ENCODE measurements at regions of chr2 and their contacts with region 1.

Region 1: GRCh38 chr2:19362755-19363473 is 4.5 kb upstream of the OSR1 start:
- DNase-seq: peak; percentile 75 to 80
- H3K4me3 ChIP-seq: peak overlapping the region; percentile 72
- H3K27ac ChIP-seq: peak overlapping the region; percentile 24
- H3K4me1 ChIP-seq: peaks cover 7% of the 10 kb centered on the region; the same call in 1 of the 2 replicates
- H3K27me3 ChIP-seq: no peaks in the 10 kb centered on the region
- CTCF ChIP-seq: peak; percentile 92

Region 2: DNA sequence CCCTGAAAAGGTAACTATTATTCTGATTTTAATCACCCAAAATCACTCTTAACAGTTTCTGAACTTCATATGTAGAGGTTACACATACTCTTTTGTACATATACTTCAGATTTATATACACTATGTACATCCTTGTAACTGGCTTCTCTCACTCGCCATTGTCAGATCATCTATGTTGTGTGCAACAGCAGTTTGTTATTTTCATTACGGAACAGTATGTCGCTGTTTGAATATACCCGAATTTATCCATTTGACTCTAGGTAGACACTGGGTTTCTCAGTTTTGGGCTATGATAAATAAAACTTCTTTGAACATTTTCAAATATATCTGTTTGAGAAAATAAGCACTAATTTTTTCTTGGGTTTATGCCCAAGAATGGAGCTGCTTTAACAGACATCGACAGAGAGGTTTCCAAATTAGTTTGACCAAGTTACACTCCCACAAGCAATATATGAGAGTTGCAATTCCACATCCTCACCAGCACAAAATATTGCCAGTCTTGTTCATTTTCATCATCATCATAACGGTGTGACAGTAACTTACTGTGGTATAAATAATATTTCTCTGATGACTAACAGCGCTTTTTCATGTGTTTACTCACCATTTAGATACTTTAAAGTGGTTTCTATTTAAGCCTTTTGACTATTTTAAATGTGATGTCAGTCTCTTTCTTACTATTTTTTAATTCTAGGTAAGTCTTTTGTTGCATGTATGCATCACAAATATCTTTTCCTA is 1690.2 kb before region 1 on chr2:
- CTCF ChIA-PET with region 1: interaction called, 11 read pairs
- POLR2A ChIA-PET with region 1: no interaction called
- intact Hi-C with region 1: no loop called
- DNase-seq: no peak
- H3K4me3 ChIP-seq: no peak overlapping the region
- H3K27ac ChIP-seq: no peak overlapping the region
- H3K4me1 ChIP-seq: no peaks in the 10 kb centered on the region
- H3K27me3 ChIP-seq: no peaks in the 10 kb centered on the region
- CTCF ChIP-seq: 0 out of 2 replicates have a peak, but pooled peaks have one; percentile 24

Region 3: GRCh38 chr2:18520451-18521425 is 842.2 kb before region 1 on chr2:
- CTCF ChIA-PET with region 1: no interaction called
- POLR2A ChIA-PET with region 1: no interaction called
- intact Hi-C with region 1: loop called (anchors 1 kb)
- DNase-seq: peak; percentile 56 to 73
- H3K4me3 ChIP-seq: no peak overlapping the region
- H3K27ac ChIP-seq: no peak overlapping the region
- H3K4me1 ChIP-seq: 0 out of 2 replicates have a peak, but pooled peaks cover 12% of the 10 kb centered on the region
- H3K27me3 ChIP-seq: no peaks in the 10 kb centered on the region
- CTCF ChIP-seq: peak; percentile 97

Region 4: GRCh38 chr2:18829251-18829902 is 533.5 kb before region 1 on chr2:
- CTCF ChIA-PET with region 1: interaction called, 3 read pairs
- POLR2A ChIA-PET with region 1: no interaction called
- intact Hi-C with region 1: loop called (anchors 1 kb)
- DNase-seq: peak; percentile 55 to 99
- H3K4me3 ChIP-seq: peak overlapping the region; percentile 15; the same call in 1 of the 2 replicates
- H3K27ac ChIP-seq: peak overlapping the region; percentile 82
- H3K4me1 ChIP-seq: peaks cover 86% of the 10 kb centered on the region
- H3K27me3 ChIP-seq: no peaks in the 10 kb centered on the region
- CTCF ChIP-seq: no peak

Region 5: DNA sequence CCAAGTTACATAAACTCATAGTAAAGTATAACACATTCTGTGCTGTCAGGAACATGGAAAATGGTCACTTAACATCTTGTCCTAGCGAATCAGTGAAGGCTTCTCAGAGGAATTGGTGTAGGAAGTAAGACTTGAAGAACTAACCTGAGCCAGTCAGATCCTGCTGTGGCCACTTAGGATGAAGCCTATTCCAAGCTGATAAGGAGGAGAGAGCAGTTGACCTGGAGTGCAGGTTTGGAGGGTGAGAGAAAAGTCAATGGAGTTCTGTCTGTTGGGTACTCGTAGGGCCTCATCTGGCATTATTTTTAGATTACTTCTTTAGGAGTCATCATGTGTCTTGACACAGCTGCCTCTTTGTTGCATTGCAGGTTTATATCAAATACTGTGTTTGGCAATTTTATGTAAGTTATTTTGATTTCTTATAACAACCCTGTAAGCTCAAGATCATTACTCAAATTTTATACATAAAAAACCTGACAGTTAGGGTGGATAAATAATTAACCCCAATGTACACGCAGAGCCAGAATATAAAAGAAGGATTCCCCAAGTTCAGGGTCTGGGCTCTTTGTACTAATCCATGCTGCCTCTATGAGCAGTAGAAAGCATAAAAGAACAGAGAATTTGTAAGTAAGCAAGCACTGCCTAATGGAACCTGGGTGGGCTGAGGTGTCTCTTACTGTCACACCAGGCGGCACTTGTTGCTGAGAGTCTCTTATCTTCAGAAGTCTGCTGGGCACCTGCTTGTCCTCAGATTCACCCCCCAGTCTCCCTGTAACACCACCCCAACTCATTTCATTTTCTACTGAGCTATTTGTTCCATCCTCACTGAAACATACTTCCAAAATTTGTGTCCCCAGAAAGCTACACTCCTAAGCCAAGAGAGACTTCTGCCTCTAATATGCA is 521.4 kb before region 1 on chr2:
- CTCF ChIA-PET with region 1: no interaction called
- POLR2A ChIA-PET with region 1: no interaction called
- intact Hi-C with region 1: no loop called
- DNase-seq: no peak
- H3K4me3 ChIP-seq: no peak overlapping the region
- H3K27ac ChIP-seq: no peak overlapping the region
- H3K4me1 ChIP-seq: no peaks in the 10 kb centered on the region
- H3K27me3 ChIP-seq: no peaks in the 10 kb centered on the region
- CTCF ChIP-seq: no peak

Region 6: DNA sequence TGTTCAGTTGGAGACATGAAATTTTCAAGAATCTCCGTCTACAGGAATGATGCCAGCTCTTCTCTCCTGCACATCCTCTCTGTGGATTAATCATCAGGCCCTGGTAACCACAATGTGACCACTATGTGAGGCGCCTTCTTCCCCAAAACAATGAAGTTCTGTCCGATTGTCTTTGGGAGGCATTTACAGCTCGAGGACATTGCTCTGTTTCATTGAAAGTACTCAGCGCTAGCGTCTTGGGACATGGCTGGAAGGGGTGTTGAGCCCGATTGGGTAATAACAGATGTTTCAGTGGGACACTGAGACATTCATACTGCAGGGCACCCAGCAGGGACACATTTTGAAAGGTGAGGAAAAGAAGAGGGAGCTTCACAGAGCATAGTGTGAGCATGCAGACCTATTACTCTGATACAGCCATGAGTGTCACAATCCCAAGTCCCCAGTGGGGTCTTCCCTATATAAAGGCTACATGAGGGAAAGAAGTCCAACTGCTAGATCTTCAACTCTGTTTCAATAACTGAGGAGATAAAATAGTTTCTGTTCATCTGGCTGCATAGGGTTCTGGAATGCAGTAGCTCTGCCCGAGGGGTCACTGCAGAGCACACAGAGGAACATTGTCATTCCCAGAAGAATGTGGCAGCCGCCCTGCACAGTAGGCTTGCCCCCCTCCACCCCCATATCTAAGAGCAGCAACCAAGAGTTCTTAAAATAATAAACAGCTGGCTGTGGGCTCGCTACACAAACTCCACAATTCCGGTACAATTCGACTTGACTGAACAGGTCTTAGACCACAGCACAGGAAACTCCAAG is 241.8 kb before region 1 on chr2:
- CTCF ChIA-PET with region 1: no interaction called
- POLR2A ChIA-PET with region 1: no interaction called
- intact Hi-C with region 1: loop called (anchors 5 kb)
- DNase-seq: peak; percentile 51 to 80
- H3K4me3 ChIP-seq: no peak overlapping the region
- H3K27ac ChIP-seq: peak overlapping the region; percentile 45
- H3K4me1 ChIP-seq: peaks cover 32% of the 10 kb centered on the region
- H3K27me3 ChIP-seq: no peaks in the 10 kb centered on the region
- CTCF ChIP-seq: no peak

Region 7: GRCh38 chr2:19554520-19554919 is 191.6 kb after region 1 on chr2:
- CTCF ChIA-PET with region 1: no interaction called
- POLR2A ChIA-PET with region 1: no interaction called
- intact Hi-C with region 1: no loop called
- DNase-seq: no peak
- H3K4me3 ChIP-seq: no peak overlapping the region
- H3K27ac ChIP-seq: no peak overlapping the region
- H3K4me1 ChIP-seq: no peaks in the 10 kb centered on the region
- H3K27me3 ChIP-seq: no peaks in the 10 kb centered on the region
- CTCF ChIP-seq: no peak

Region 8: DNA sequence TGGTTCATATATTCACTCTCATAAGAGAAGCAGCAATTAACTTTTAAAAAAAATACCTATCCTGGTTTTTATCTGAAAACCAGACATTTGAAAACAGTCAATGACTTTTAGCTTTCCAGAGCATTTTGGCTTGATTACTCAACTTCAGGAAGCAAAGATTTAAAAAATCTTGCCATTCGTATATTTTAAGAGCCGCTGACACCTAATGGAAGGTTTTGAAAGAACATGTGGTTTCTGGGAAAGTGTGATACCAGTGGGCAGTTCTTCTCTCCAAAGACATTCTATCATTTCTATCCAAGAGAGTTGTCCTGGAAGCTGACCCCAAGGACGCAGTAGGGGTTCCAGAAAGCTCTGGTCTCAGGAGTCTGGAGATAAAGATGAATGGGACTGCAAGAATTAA is 304.2 kb after region 1 on chr2:
- CTCF ChIA-PET with region 1: no interaction called
- POLR2A ChIA-PET with region 1: no interaction called
- intact Hi-C with region 1: loop called (anchors 1 kb)
- DNase-seq: no peak
- H3K4me3 ChIP-seq: no peak overlapping the region
- H3K27ac ChIP-seq: 0 out of 2 replicates have a peak overlapping the region, but pooled peaks have one; percentile 8
- H3K4me1 ChIP-seq: peaks cover 10% of the 10 kb centered on the region
- H3K27me3 ChIP-seq: no peaks in the 10 kb centered on the region
- CTCF ChIP-seq: peak; percentile 63; the same call in 1 of the 2 replicates

Region 9: GRCh38 chr2:20097879-20098714 is 735.2 kb after region 1 on chr2:
- CTCF ChIA-PET with region 1: interaction called, 14 read pairs
- POLR2A ChIA-PET with region 1: no interaction called
- intact Hi-C with region 1: loop called (anchors 10 kb)
- DNase-seq: peak; percentile 68 to 73
- H3K4me3 ChIP-seq: no peak overlapping the region
- H3K27ac ChIP-seq: peak overlapping the region; percentile 1; the same call in 1 of the 2 replicates
- H3K4me1 ChIP-seq: peaks cover 26% of the 10 kb centered on the region
- H3K27me3 ChIP-seq: no peaks in the 10 kb centered on the region
- CTCF ChIP-seq: peak; percentile 90